Heart right ventricle (tissue), 16 donors: ENCODE measurements at regions of chr18 and their contacts with region 1.

Region 1: GRCh38 chr18:58195278-58195765 is 151.3 kb downstream of the NEDD4L start:
- DNase-seq: no peak
- ATAC-seq: peak; percentile 12 to 52 (median 38)
- H3K4me3 ChIP-seq: peak overlapping the region in 9 of 10 donors; percentile 18 to 55 (median 51)
- H3K27ac ChIP-seq: peak overlapping the region in 3 of 10 donors; percentile 17 to 33 (median 29)
- H3K4me1 ChIP-seq: peaks cover 0 to 30% (median 9%) of the 10 kb centered on the region in 9 donors
- H3K27me3 ChIP-seq: peaks cover 0 to 23% (median 0%) of the 10 kb centered on the region in 7 donors
- CTCF ChIP-seq: no peak

Region 2: GRCh38 chr18:58135701-58136331 is 59.5 kb before region 1 on chr18:
- intact Hi-C with region 1: loop called in 1 of 10 experiments (anchors 10 kb)
- DNase-seq: peak in 1 of 2 donors; percentile 42
- ATAC-seq: peak; percentile 47 to 83 (median 64)
- H3K4me3 ChIP-seq: no peak overlapping the region
- H3K27ac ChIP-seq: no peak overlapping the region
- H3K4me1 ChIP-seq: peaks cover 0 to 8% (median 0%) of the 10 kb centered on the region in 9 donors
- H3K27me3 ChIP-seq: no peaks in the 10 kb centered on the region
- CTCF ChIP-seq: peak; percentile 57 to 87 (median 78)

Region 3: DNA sequence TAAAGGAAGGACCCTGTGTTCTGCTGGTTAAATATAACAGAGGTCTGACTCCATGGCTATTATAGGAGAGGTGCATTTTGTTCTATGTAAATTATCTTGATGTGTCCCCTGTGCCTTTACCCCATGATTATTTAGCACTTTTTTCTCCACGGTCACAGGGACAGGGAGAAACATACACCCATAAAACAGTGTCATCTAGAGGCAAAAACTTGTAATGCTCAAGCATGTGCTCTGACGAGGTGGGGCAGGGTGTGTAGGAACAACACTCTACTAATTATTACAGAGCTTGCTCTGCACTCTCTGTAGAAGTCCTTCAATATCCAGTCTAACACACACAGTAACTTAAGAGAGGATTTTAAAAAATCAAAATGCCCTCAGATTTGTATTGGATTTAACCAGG is 36.6 kb after region 1 on chr18:
- intact Hi-C with region 1: loop called in 3 of 10 experiments (anchors 2 to 5 kb)
- DNase-seq: no peak
- ATAC-seq: peak in 7 of 8 donors; percentile 67 to 87 (median 74)
- H3K4me3 ChIP-seq: no peak overlapping the region
- H3K27ac ChIP-seq: no peak overlapping the region
- H3K4me1 ChIP-seq: no peaks in the 10 kb centered on the region
- H3K27me3 ChIP-seq: no peaks in the 10 kb centered on the region
- CTCF ChIP-seq: peak in 7 of 9 donors; percentile 30 to 61 (median 54)

Region 4: DNA sequence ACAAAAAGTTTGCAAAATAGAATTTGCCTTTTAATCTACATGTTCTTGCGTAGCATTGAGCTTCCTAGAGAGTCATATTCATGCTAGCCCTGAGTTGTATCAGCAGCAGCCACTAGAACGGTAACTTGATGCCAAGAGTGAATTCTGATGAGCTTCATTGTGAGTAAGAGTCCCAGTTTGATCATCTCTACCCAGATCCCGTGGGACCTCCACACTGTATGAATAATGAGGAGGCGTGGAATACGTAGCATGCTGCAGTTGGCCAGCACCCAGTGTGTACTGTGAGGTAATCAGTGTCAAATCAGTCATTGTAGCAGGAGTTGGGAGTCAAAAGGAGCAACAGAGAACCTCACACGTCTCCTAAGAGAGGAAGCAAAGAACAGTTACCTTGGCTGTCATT is 46.6 kb after region 1 on chr18:
- intact Hi-C with region 1: loop called in 2 of 10 experiments (anchors 2 to 5 kb)
- DNase-seq: no peak
- ATAC-seq: peak in 7 of 8 donors; percentile 35 to 90 (median 60)
- H3K4me3 ChIP-seq: no peak overlapping the region
- H3K27ac ChIP-seq: no peak overlapping the region
- H3K4me1 ChIP-seq: peaks cover 4 to 25% (median 10%) of the 10 kb centered on the region in 9 donors
- H3K27me3 ChIP-seq: no peaks in the 10 kb centered on the region
- CTCF ChIP-seq: no peak

Region 5: DNA sequence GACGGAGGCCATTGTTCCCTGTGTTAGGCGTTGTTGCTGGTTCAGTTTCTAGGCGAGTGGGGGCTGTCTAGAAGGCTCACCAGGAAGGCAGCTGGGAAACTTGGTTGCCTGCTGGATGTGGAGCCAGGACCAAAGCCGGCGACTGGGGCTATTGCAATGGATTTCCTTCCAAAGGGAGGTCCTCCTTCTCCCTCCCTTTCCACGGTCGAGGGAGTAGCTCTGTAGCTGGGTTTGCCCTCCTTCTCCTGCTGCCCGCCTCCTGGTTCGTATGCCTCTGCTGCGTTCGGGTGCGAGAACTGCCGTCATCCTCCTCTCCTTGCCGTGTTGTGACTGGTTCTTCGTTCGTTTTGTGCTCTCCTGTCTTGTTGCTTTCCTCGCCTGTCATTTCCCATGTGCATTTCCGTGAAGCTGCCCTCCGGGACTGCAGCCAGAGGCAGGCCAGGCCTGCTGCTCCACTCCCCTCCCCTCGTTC is 52.1 kb after region 1 on chr18:
- intact Hi-C with region 1: loop called in 2 of 10 experiments (anchors 2 to 5 kb)
- DNase-seq: peak; percentile 23 to 44
- ATAC-seq: peak; percentile 73 to 90 (median 86)
- H3K4me3 ChIP-seq: peak overlapping the region in 9 of 10 donors; percentile 7 to 50 (median 33)
- H3K27ac ChIP-seq: peak overlapping the region; percentile 30 to 87 (median 79)
- H3K4me1 ChIP-seq: peaks cover 0 to 23% (median 12%) of the 10 kb centered on the region in 9 donors
- H3K27me3 ChIP-seq: no peaks in the 10 kb centered on the region
- CTCF ChIP-seq: no peak